ENCODE measurements at regions of chr16 and their contacts with region 1.

Region 1: GRCh38 chr16:50836121-50836621 is 94.3 kb downstream of the CYLD start:
- DNase-seq: no peak
- ATAC-seq: no peak
- H3K4me3 ChIP-seq: no peak overlapping the region
- H3K4me3 Mint-ChIP-seq: no peak overlapping the region
- H3K27ac ChIP-seq: no peak overlapping the region
- H3K27ac Mint-ChIP-seq: no peak overlapping the region
- H3K4me1 ChIP-seq: peaks cover 2 to 6% of the 10 kb centered on the region in 2 experiments
- H3K4me1 Mint-ChIP-seq: peaks cover 10 to 11% (median 10%) of the 10 kb centered on the region in 3 donors
- H3K27me3 ChIP-seq: peaks cover 0 to 34% of the 10 kb centered on the region in 2 experiments
- H3K27me3 Mint-ChIP-seq: peaks cover 6 to 12% of the 10 kb centered on the region in 2 donors

Region 2: GRCh38 chr16:49292413-49292812 is 1543.8 kb before region 1 on chr16:
- CTCF ChIA-PET with region 1: no interaction called
- POLR2A ChIA-PET with region 1: interaction called in 1 of 2 experiments, 11 read pairs
- DNase-seq: no peak
- ATAC-seq: no peak
- H3K4me3 ChIP-seq: no peak overlapping the region
- H3K4me3 Mint-ChIP-seq: no peak overlapping the region
- H3K27ac ChIP-seq: no peak overlapping the region
- H3K27ac Mint-ChIP-seq: no peak overlapping the region
- H3K4me1 ChIP-seq: no peaks in the 10 kb centered on the region
- H3K4me1 Mint-ChIP-seq: no peaks in the 10 kb centered on the region
- H3K27me3 ChIP-seq: peaks cover 3 to 7% of the 10 kb centered on the region in 2 experiments
- H3K27me3 Mint-ChIP-seq: peaks cover 6 to 25% of the 10 kb centered on the region in 2 donors

Region 3: GRCh38 chr16:50593410-50594150 is 242.6 kb before region 1 on chr16:
- CTCF ChIA-PET with region 1: no interaction called
- POLR2A ChIA-PET with region 1: no interaction called
- DNase-seq: no peak
- ATAC-seq: no peak
- H3K4me3 ChIP-seq: no peak overlapping the region
- H3K4me3 Mint-ChIP-seq: no peak overlapping the region
- H3K27ac ChIP-seq: no peak overlapping the region
- H3K27ac Mint-ChIP-seq: no peak overlapping the region
- H3K4me1 ChIP-seq: peaks cover 18 to 48% of the 10 kb centered on the region in 2 experiments
- H3K4me1 Mint-ChIP-seq: peaks cover 23 to 51% (median 39%) of the 10 kb centered on the region in 3 donors
- H3K27me3 ChIP-seq: no peaks in the 10 kb centered on the region
- H3K27me3 Mint-ChIP-seq: no peaks in the 10 kb centered on the region

Region 4: DNA sequence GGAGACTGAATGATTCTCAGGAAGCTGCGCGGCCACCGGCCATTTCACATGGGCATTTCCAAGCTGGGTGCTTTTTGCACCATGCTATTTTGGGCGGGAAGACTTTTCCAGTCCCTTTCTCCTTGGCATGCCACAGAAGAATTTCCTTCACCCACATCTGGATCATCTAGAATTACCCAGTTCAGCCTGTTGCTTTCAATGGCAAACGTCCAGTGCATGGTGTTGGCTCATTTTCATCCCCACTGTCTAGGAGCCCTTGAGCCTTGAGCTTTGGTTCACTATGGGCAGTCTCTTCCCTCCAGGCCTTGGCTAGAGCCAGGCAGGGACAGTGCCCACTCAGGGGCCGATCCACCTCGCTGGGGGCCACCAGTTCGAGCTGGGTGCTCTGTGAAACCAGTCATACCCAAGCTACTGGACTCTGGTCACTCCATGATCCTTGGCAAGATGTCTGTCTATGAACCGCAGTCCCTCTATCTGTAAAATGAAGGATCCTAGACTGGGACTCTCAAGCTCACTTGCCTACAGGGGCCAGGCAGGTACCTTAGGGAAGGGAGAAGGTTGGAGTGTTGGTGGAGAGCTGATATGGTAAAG is 23.2 kb before region 1 on chr16:
- CTCF ChIA-PET with region 1: no interaction called
- POLR2A ChIA-PET with region 1: no interaction called
- DNase-seq: no peak
- ATAC-seq: no peak
- H3K4me3 ChIP-seq: no peak overlapping the region
- H3K4me3 Mint-ChIP-seq: no peak overlapping the region
- H3K27ac ChIP-seq: no peak overlapping the region
- H3K27ac Mint-ChIP-seq: no peak overlapping the region
- H3K4me1 ChIP-seq: no peaks in the 10 kb centered on the region
- H3K4me1 Mint-ChIP-seq: peaks cover 0 to 4% (median 0%) of the 10 kb centered on the region in 3 donors
- H3K27me3 ChIP-seq: peaks cover 0 to 11% of the 10 kb centered on the region in 2 experiments
- H3K27me3 Mint-ChIP-seq: peaks cover 1 to 4% of the 10 kb centered on the region in 2 donors

Region 5: GRCh38 chr16:51119556-51119955 is 283.4 kb after region 1 on chr16:
- CTCF ChIA-PET with region 1: no interaction called
- POLR2A ChIA-PET with region 1: no interaction called
- DNase-seq: no peak
- ATAC-seq: no peak
- H3K4me3 ChIP-seq: no peak overlapping the region
- H3K4me3 Mint-ChIP-seq: no peak overlapping the region
- H3K27ac ChIP-seq: no peak overlapping the region
- H3K27ac Mint-ChIP-seq: no peak overlapping the region
- H3K4me1 ChIP-seq: no peaks in the 10 kb centered on the region
- H3K4me1 Mint-ChIP-seq: no peaks in the 10 kb centered on the region
- H3K27me3 ChIP-seq: peaks cover 0 to 12% of the 10 kb centered on the region in 2 experiments
- H3K27me3 Mint-ChIP-seq: peaks cover 26 to 40% of the 10 kb centered on the region in 2 donors